ENCODE measurements at regions of chr3 and their contacts with region 1.

Region 1: GRCh38 chr3:33001889-33002288 is 50.4 kb downstream of the CCR4 start:
- DNase-seq: peak; percentile 62
- ATAC-seq: peak; percentile 41
- H3K4me3 Mint-ChIP-seq: no peak overlapping the region
- H3K27ac Mint-ChIP-seq: no peak overlapping the region
- H3K4me1 Mint-ChIP-seq: peaks cover 59% of the 10 kb centered on the region
- H3K27me3 Mint-ChIP-seq: no peaks in the 10 kb centered on the region
- CTCF ChIP-seq: no peak

Region 2: GRCh38 chr3:33023172-33024136 is 21.6 kb after region 1 on chr3:
- CTCF ChIA-PET with region 1: interaction called, 4 read pairs
- POLR2A ChIA-PET with region 1: interaction called, 4 read pairs
- intact Hi-C with region 1: loop called (anchors 2 kb)
- DNase-seq: peak; percentile 33
- ATAC-seq: peak; percentile 86
- H3K4me3 Mint-ChIP-seq: peak overlapping the region; percentile 38
- H3K27ac Mint-ChIP-seq: peak overlapping the region; percentile 95
- H3K4me1 Mint-ChIP-seq: peaks cover 49% of the 10 kb centered on the region
- H3K27me3 Mint-ChIP-seq: no peaks in the 10 kb centered on the region
- CTCF ChIP-seq: peak; percentile 32